B cell (primary cell): ENCODE measurements at regions of chr5 and their contacts with region 1.

Region 1: DNA sequence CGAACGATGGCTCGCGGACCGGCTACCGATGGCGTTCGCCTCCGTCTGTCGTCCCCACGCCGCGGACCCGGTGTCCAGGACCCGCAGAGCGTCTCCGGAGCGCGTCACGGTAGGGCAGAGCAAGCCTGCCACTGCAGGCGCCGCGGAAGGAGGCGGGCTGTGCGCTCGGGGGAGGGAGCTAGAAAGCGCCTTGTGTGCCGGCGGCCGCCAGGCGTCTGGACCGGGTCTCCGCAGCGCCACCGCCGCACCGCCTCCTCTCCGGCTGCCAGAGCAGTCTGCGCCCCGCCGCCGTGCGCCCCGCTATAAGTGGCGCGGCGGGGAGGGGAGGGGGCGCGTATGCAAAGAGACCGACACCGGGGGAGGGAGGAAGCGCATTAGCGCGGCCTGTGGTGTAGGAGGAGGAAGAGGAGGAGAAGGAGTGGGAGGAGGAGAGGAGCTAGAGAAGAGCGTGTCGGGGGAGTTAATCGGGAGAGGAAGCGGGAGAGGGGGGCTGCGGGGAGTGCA is at the start of gene ENC1:
- DNase-seq: peak; percentile 88
- ATAC-seq: peak; percentile 76
- H3K4me3 ChIP-seq: peak within 1 kb of the TSS; percentile 74 to 88 (median 82)
- H3K4me3 Mint-ChIP-seq: peak within 1 kb of the TSS; percentile 87
- H3K27ac ChIP-seq: peak within 1 kb of the TSS; percentile 40 to 69
- H3K27ac Mint-ChIP-seq: peak within 1 kb of the TSS; percentile 64
- H3K4me1 ChIP-seq: peaks cover 20 to 32% of the 10 kb centered on the region in 2 donors
- H3K4me1 Mint-ChIP-seq: peaks cover 21% of the 10 kb centered on the region
- H3K27me3 ChIP-seq: no peaks in the 10 kb centered on the region
- H3K27me3 Mint-ChIP-seq: no peaks in the 10 kb centered on the region
- CTCF ChIP-seq: peak; percentile 47
- total RNA-seq, gene ENC1: 14.2 and 14.6 TPM in 2 replicates

Region 2: GRCh38 chr5:73565139-73565968 is 1075.1 kb before region 1 on chr5 and contains the starts of genes ANKRA2 and UTP15:
- CTCF ChIA-PET with region 1: no interaction called
- POLR2A ChIA-PET with region 1: no interaction called
- intact Hi-C with region 1: loop called (anchors 10 kb)
- DNase-seq: peak; percentile 99
- ATAC-seq: peak; percentile 97
- H3K4me3 ChIP-seq: peak within 1 kb of the TSS; percentile 77 to 97 (median 92)
- H3K4me3 Mint-ChIP-seq: peak within 1 kb of the TSS; percentile 88
- H3K27ac ChIP-seq: peak within 1 kb of the TSS; percentile 92 to 97
- H3K27ac Mint-ChIP-seq: peak within 1 kb of the TSS; percentile 97
- H3K4me1 ChIP-seq: peaks cover 18 to 23% of the 10 kb centered on the region in 2 donors
- H3K4me1 Mint-ChIP-seq: peaks cover 36% of the 10 kb centered on the region
- H3K27me3 ChIP-seq: no peaks in the 10 kb centered on the region
- H3K27me3 Mint-ChIP-seq: no peaks in the 10 kb centered on the region
- CTCF ChIP-seq: no peak
- total RNA-seq, gene ANKRA2: 47.9 and 56.1 TPM in 2 replicates
- total RNA-seq, gene UTP15: 25.3 and 29.9 TPM in 2 replicates

Region 3: DNA sequence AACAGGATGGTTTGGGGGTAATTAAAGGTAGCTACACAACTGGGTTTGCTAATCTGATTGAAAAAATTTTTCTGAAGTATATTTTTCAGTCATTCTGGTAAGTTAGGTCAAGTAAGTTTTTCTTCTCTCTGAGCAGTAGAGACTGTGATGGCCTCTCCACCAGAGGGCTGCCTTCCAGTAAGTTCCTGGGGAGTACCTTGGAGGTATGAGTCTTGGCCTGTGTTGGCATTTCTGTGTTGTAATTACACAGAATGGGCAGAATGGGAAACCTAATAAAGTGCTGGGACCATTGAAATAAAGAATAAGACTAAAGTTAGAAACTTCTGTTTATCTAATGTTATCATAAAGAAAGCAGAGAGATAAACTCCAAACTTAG is 583.7 kb before region 1 on chr5:
- CTCF ChIA-PET with region 1: no interaction called
- POLR2A ChIA-PET with region 1: no interaction called
- intact Hi-C with region 1: loop called (anchors 10 kb)
- DNase-seq: no peak
- ATAC-seq: no peak
- H3K4me3 ChIP-seq: no peak overlapping the region
- H3K4me3 Mint-ChIP-seq: no peak overlapping the region
- H3K27ac ChIP-seq: no peak overlapping the region
- H3K27ac Mint-ChIP-seq: no peak overlapping the region
- H3K4me1 ChIP-seq: no peaks in the 10 kb centered on the region
- H3K4me1 Mint-ChIP-seq: no peaks in the 10 kb centered on the region
- H3K27me3 ChIP-seq: no peaks in the 10 kb centered on the region
- H3K27me3 Mint-ChIP-seq: peaks cover 12% of the 10 kb centered on the region
- CTCF ChIP-seq: no peak

Region 4: GRCh38 chr5:74107899-74108298 is 532.6 kb before region 1 on chr5:
- CTCF ChIA-PET with region 1: no interaction called
- POLR2A ChIA-PET with region 1: no interaction called
- intact Hi-C with region 1: no loop called
- DNase-seq: no peak
- ATAC-seq: no peak
- H3K4me3 ChIP-seq: no peak overlapping the region
- H3K4me3 Mint-ChIP-seq: no peak overlapping the region
- H3K27ac ChIP-seq: no peak overlapping the region
- H3K27ac Mint-ChIP-seq: no peak overlapping the region
- H3K4me1 ChIP-seq: no peaks in the 10 kb centered on the region
- H3K4me1 Mint-ChIP-seq: no peaks in the 10 kb centered on the region
- H3K27me3 ChIP-seq: no peaks in the 10 kb centered on the region
- H3K27me3 Mint-ChIP-seq: peaks cover 11% of the 10 kb centered on the region
- CTCF ChIP-seq: no peak

Region 5: DNA sequence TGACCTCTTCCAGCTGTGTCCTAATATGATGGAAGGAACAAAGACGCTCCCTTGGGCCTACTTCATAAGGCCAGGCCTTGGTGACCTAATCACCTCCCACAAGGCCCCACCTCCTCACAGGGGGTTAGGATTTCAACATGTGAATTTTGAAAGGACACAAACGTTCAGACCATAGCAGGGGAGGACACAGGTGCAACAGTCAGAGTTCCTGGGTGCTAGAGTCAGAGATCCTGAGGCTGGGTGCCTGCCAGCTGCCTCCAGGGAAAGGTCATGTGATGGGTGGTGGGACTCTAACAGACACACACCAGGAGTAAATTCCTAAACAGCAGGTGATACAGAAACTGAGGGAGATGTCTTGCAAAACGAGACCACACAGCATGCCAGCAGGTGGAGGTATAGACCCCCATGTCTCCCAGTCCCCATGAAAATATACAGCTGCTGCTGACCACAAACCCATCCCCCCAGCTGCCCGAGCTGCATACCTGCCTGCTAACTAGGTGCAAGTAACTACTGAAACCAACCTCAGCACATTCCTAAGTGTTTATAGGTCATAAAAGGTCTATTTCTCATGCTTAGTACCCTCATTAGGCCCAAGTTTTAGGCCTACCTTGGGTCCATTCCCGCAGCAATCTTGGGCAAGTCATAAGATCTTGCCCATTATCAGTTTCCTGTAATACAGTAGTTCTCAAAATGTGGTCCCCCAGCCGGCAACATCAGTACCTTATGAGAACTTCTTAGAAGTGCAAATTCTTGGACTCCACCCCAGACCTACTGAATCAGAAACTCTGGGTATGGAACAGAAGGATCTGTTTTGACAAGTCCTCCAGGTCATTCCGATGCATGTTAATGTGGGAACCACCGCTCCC is 245.4 kb before region 1 on chr5:
- CTCF ChIA-PET with region 1: interaction called, 24 read pairs
- POLR2A ChIA-PET with region 1: no interaction called
- intact Hi-C with region 1: loop called (anchors 1 kb)
- DNase-seq: peak; percentile 7
- ATAC-seq: no peak
- H3K4me3 ChIP-seq: no peak overlapping the region
- H3K4me3 Mint-ChIP-seq: no peak overlapping the region
- H3K27ac ChIP-seq: no peak overlapping the region
- H3K27ac Mint-ChIP-seq: no peak overlapping the region
- H3K4me1 ChIP-seq: no peaks in the 10 kb centered on the region
- H3K4me1 Mint-ChIP-seq: no peaks in the 10 kb centered on the region
- H3K27me3 ChIP-seq: no peaks in the 10 kb centered on the region
- H3K27me3 Mint-ChIP-seq: peaks cover 3% of the 10 kb centered on the region
- CTCF ChIP-seq: no peak

Region 6: DNA sequence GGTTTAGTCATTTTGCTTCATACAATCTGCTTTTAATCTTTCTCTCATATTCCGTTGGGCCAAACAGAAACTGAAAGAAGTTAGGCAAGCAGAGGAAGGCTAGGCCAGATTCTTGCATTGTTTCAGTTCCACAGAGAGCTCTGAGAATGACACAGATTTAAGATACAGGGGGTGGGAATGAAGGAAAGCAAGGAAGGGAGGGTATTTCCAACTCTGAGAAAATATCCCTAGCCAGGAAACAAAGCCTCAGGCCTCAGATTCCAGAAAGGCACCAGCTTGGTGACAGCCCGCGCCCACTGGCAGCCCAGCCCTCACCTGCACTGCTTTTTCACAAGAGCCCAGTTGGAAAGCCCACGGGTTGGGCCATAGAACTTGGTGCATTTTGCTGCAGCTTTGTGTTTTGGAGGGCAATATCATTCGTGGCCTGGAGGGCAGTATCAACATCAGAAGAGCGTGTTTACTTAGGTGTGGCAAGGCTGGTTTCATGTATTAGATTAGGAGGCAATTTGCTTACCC is 63.5 kb before region 1 on chr5:
- CTCF ChIA-PET with region 1: no interaction called
- POLR2A ChIA-PET with region 1: no interaction called
- intact Hi-C with region 1: loop called (anchors 2 kb)
- DNase-seq: peak; percentile 39
- ATAC-seq: peak; percentile 51
- H3K4me3 ChIP-seq: peak overlapping the region in 2 of 5 experiments; percentile 6 to 9
- H3K4me3 Mint-ChIP-seq: peak overlapping the region; percentile 64
- H3K27ac ChIP-seq: peak overlapping the region in 1 of 2 donors; percentile 67
- H3K27ac Mint-ChIP-seq: peak overlapping the region; percentile 64
- H3K4me1 ChIP-seq: peaks cover 7 to 10% of the 10 kb centered on the region in 2 donors
- H3K4me1 Mint-ChIP-seq: peaks cover 16% of the 10 kb centered on the region
- H3K27me3 ChIP-seq: no peaks in the 10 kb centered on the region
- H3K27me3 Mint-ChIP-seq: peaks cover 8% of the 10 kb centered on the region
- CTCF ChIP-seq: no peak

Region 7: DNA sequence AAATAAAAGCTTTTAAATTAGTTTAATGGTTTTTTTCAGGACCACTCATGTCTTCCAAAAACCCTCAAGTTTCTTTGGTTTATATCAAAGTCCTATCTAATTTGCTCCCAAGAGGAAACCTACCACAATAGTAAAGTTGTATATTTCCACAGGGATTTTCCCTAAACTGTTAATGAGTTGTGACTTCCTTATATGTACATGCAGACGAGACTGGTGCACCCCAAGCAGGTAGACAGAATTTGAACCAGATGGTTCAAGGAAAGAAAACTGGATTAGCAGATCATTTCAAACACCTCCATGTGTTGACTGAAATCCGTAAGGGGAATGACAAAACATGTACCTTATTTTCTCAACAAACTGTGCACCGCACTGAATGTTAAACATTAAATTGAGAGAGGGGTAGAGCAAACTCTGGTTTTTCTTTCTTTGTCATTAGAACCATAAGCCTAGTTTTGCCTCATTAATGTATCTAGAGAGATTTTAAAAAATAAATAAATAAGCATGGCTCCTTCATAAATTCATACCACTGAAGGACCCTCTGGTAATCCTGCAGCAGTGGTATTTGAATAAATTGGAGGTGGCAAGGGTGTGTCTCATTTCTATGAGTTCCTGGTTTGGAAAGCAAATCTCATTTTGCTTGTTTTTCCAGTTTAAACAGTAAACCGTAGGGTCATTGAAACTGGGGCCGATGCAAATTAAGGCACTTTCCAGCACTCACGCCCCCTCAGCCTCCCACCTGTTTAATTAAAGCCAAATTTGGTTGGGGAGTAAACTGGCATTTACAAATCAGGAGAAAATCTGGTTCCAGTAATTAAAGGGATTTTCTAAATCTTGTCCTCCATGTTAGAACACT is 51.1 kb before region 1 on chr5:
- CTCF ChIA-PET with region 1: no interaction called
- POLR2A ChIA-PET with region 1: no interaction called
- intact Hi-C with region 1: no loop called
- DNase-seq: no peak
- ATAC-seq: no peak
- H3K4me3 ChIP-seq: no peak overlapping the region
- H3K4me3 Mint-ChIP-seq: no peak overlapping the region
- H3K27ac ChIP-seq: no peak overlapping the region
- H3K27ac Mint-ChIP-seq: no peak overlapping the region
- H3K4me1 ChIP-seq: peaks cover 3 to 5% of the 10 kb centered on the region in 2 donors
- H3K4me1 Mint-ChIP-seq: peaks cover 3% of the 10 kb centered on the region
- H3K27me3 ChIP-seq: no peaks in the 10 kb centered on the region
- H3K27me3 Mint-ChIP-seq: peaks cover 28% of the 10 kb centered on the region
- CTCF ChIP-seq: no peak

Region 8: DNA sequence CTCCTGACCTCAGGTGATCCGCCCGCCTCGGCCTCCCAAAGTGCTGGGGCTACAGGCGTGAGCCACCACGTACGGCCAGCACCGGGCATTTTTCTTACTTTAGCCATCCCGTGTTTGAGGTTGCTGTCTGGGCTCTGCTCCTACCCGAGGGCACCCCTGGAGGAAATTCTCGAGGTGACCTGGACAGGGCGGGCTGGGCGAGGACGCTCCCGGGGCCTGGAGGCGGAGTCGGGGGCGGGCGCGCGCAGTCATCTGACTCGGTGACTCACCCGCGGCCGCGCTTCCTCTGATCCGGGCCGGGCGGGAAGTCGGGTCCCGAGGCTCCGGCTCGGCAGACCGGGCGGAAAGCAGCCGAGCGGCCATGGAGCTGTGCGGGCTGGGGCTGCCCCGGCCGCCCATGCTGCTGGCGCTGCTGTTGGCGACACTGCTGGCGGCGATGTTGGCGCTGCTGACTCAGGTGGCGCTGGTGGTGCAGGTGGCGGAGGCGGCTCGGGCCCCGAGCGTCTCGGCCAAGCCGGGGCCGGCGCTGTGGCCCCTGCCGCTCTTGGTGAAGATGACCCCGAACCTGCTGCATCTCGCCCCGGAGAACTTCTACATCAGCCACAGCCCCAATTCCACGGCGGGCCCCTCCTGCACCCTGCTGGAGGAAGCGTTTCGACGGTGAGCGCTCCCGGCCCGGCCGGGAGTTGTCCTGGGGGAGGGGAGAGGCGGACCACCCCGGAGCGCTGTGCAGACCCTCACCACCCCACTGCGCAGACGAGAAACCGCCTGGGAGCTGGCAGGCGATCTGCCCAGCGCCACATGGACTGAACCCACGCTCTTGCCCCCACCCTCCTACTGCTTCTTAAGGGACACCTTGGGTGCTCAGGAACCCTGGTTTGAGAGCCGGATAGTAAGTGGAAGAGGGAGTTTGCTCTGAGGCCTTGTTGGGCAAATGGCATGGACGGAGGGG is 44.7 kb after region 1 on chr5 and contains the start of gene HEXB:
- CTCF ChIA-PET with region 1: no interaction called
- POLR2A ChIA-PET with region 1: no interaction called
- intact Hi-C with region 1: loop called (anchors 2 kb)
- DNase-seq: peak; percentile 80
- ATAC-seq: peak; percentile 85
- H3K4me3 ChIP-seq: peak within 1 kb of the TSS; percentile 80 to 98 (median 88)
- H3K4me3 Mint-ChIP-seq: peak within 1 kb of the TSS; percentile 87
- H3K27ac ChIP-seq: peak within 1 kb of the TSS; percentile 42 to 67
- H3K27ac Mint-ChIP-seq: peak within 1 kb of the TSS; percentile 75
- H3K4me1 ChIP-seq: peaks cover 12 to 16% of the 10 kb centered on the region in 2 donors
- H3K4me1 Mint-ChIP-seq: peaks cover 20% of the 10 kb centered on the region
- H3K27me3 ChIP-seq: no peaks in the 10 kb centered on the region
- H3K27me3 Mint-ChIP-seq: peaks cover 2% of the 10 kb centered on the region
- CTCF ChIP-seq: no peak
- total RNA-seq, gene HEXB: 47.1 and 55.3 TPM in 2 replicates